B cell (primary cell): ENCODE measurements at regions of chr10 and their contacts with region 1.

Region 1: GRCh38 chr10:101467286-101467770 is 113.4 kb downstream of the BTRC start:
- DNase-seq: peak; percentile 70
- ATAC-seq: peak; percentile 61
- H3K4me3 ChIP-seq: no peak overlapping the region
- H3K4me3 Mint-ChIP-seq: no peak overlapping the region
- H3K27ac ChIP-seq: no peak overlapping the region
- H3K27ac Mint-ChIP-seq: no peak overlapping the region
- H3K4me1 ChIP-seq: no peaks in the 10 kb centered on the region
- H3K4me1 Mint-ChIP-seq: peaks cover 8% of the 10 kb centered on the region
- H3K27me3 ChIP-seq: no peaks in the 10 kb centered on the region
- H3K27me3 Mint-ChIP-seq: no peaks in the 10 kb centered on the region
- CTCF ChIP-seq: peak; percentile 93

Region 2: GRCh38 chr10:101238732-101239105 is 228.6 kb before region 1 on chr10:
- CTCF ChIA-PET with region 1: no interaction called
- POLR2A ChIA-PET with region 1: no interaction called
- intact Hi-C with region 1: no loop called
- DNase-seq: peak; percentile 46
- ATAC-seq: no peak
- H3K4me3 ChIP-seq: no peak overlapping the region
- H3K4me3 Mint-ChIP-seq: no peak overlapping the region
- H3K27ac ChIP-seq: no peak overlapping the region
- H3K27ac Mint-ChIP-seq: no peak overlapping the region
- H3K4me1 ChIP-seq: peaks cover 21 to 32% of the 10 kb centered on the region in 2 donors
- H3K4me1 Mint-ChIP-seq: peaks cover 12% of the 10 kb centered on the region
- H3K27me3 ChIP-seq: peaks cover 0 to 72% (median 62%) of the 10 kb centered on the region in 4 experiments
- H3K27me3 Mint-ChIP-seq: peaks cover 77% of the 10 kb centered on the region
- CTCF ChIP-seq: peak; percentile 58

Region 3: GRCh38 chr10:101266381-101267289 is 200.7 kb before region 1 on chr10:
- CTCF ChIA-PET with region 1: interaction called, 10 read pairs
- POLR2A ChIA-PET with region 1: no interaction called
- intact Hi-C with region 1: no loop called
- DNase-seq: no peak
- ATAC-seq: no peak
- H3K4me3 ChIP-seq: no peak overlapping the region
- H3K4me3 Mint-ChIP-seq: no peak overlapping the region
- H3K27ac ChIP-seq: no peak overlapping the region
- H3K27ac Mint-ChIP-seq: no peak overlapping the region
- H3K4me1 ChIP-seq: no peaks in the 10 kb centered on the region
- H3K4me1 Mint-ChIP-seq: no peaks in the 10 kb centered on the region
- H3K27me3 ChIP-seq: peaks cover 0 to 14% (median 4%) of the 10 kb centered on the region in 4 experiments
- H3K27me3 Mint-ChIP-seq: peaks cover 37% of the 10 kb centered on the region
- CTCF ChIP-seq: no peak

Region 4: GRCh38 chr10:101291331-101292193 is 175.8 kb before region 1 on chr10:
- CTCF ChIA-PET with region 1: interaction called, 10 read pairs
- POLR2A ChIA-PET with region 1: no interaction called
- intact Hi-C with region 1: no loop called
- DNase-seq: peak; percentile 68
- ATAC-seq: peak; percentile 69
- H3K4me3 ChIP-seq: peak overlapping the region in 4 of 5 experiments; percentile 24 to 63 (median 44)
- H3K4me3 Mint-ChIP-seq: peak overlapping the region; percentile 83
- H3K27ac ChIP-seq: no peak overlapping the region
- H3K27ac Mint-ChIP-seq: no peak overlapping the region
- H3K4me1 ChIP-seq: peaks cover 21 to 35% of the 10 kb centered on the region in 2 donors
- H3K4me1 Mint-ChIP-seq: peaks cover 18% of the 10 kb centered on the region
- H3K27me3 ChIP-seq: peaks cover 2 to 80% (median 49%) of the 10 kb centered on the region in 4 experiments
- H3K27me3 Mint-ChIP-seq: peaks cover 64% of the 10 kb centered on the region
- CTCF ChIP-seq: peak; percentile 73

Region 5: GRCh38 chr10:101453791-101454718 is 13.3 kb before region 1 on chr10:
- CTCF ChIA-PET with region 1: interaction called, 24 read pairs
- POLR2A ChIA-PET with region 1: no interaction called
- intact Hi-C with region 1: no loop called
- DNase-seq: no peak
- ATAC-seq: no peak
- H3K4me3 ChIP-seq: no peak overlapping the region
- H3K4me3 Mint-ChIP-seq: no peak overlapping the region
- H3K27ac ChIP-seq: no peak overlapping the region
- H3K27ac Mint-ChIP-seq: no peak overlapping the region
- H3K4me1 ChIP-seq: peaks cover 8 to 15% of the 10 kb centered on the region in 2 donors
- H3K4me1 Mint-ChIP-seq: peaks cover 21% of the 10 kb centered on the region
- H3K27me3 ChIP-seq: no peaks in the 10 kb centered on the region
- H3K27me3 Mint-ChIP-seq: no peaks in the 10 kb centered on the region
- CTCF ChIP-seq: no peak

Region 6: DNA sequence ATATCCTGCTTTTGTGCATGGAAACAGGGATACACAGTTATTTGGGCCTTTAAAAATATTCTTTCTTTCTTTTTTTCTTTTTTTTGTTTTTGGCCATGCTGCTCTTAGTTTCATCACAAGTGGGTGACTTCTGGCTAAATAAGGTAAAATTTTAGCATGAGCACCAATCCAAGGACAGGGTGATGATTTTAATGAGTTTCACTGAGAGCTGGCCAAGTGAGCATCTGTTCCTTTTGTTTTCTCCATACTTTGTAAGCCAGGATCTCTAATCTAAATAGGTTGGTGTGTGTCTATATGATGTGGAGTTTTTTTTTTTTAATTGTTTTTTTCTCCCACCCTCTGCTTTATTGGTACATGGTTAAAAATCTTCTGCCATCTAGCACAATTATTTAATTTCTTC is 13.9 kb after region 1 on chr10:
- CTCF ChIA-PET with region 1: interaction called, 20 read pairs
- POLR2A ChIA-PET with region 1: no interaction called
- intact Hi-C with region 1: no loop called
- DNase-seq: no peak
- ATAC-seq: no peak
- H3K4me3 ChIP-seq: no peak overlapping the region
- H3K4me3 Mint-ChIP-seq: no peak overlapping the region
- H3K27ac ChIP-seq: no peak overlapping the region
- H3K27ac Mint-ChIP-seq: no peak overlapping the region
- H3K4me1 ChIP-seq: no peaks in the 10 kb centered on the region
- H3K4me1 Mint-ChIP-seq: no peaks in the 10 kb centered on the region
- H3K27me3 ChIP-seq: no peaks in the 10 kb centered on the region
- H3K27me3 Mint-ChIP-seq: no peaks in the 10 kb centered on the region
- CTCF ChIP-seq: no peak

Region 7: GRCh38 chr10:101818119-101818871 is 351.0 kb after region 1 on chr10 and contains the start of gene OGA:
- CTCF ChIA-PET with region 1: no interaction called
- POLR2A ChIA-PET with region 1: no interaction called
- intact Hi-C with region 1: no loop called
- DNase-seq: peak; percentile 98
- ATAC-seq: peak; percentile 87
- H3K4me3 ChIP-seq: peak within 1 kb of the TSS; percentile 56 to 97 (median 92)
- H3K4me3 Mint-ChIP-seq: peak within 1 kb of the TSS; percentile 94
- H3K27ac ChIP-seq: peak within 1 kb of the TSS; percentile 81 to 85
- H3K27ac Mint-ChIP-seq: peak within 1 kb of the TSS; percentile 99
- H3K4me1 ChIP-seq: peaks cover 27% of the 10 kb centered on the region in 2 donors
- H3K4me1 Mint-ChIP-seq: peaks cover 35% of the 10 kb centered on the region
- H3K27me3 ChIP-seq: no peaks in the 10 kb centered on the region
- H3K27me3 Mint-ChIP-seq: no peaks in the 10 kb centered on the region
- CTCF ChIP-seq: no peak
- total RNA-seq, gene OGA: 418 and 442 TPM in 2 replicates